Calu3 (cell line): ENCODE measurements at regions of chr9 and their contacts with region 1.

Region 1: DNA sequence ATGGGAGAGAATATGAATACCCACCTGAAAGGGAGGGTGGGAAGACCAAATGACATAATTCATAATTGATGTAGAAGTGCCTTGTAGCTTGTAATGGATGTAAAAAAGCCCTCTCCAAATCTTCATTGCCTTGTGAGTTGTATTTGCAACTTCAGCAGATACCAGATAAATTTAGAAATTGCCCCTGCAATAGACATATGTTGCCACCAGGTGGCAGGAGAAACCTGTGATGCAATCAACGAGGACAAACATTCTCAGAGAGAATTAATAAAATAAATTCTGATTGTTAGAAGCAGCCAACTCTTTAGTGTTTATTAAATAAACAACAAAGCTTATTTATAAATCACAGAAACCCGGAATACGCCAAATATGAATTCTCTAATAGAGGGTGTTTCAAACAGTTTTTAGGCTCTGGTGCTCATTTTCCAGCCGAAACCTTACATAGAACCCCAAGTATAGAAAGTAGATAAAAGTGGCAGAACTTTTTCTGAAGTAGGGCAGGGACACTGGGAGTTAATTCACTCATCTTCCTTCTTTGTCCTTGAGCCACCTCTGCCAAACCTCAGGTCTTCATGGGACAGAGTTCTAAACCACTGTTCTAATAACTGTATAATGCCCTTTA is 147.8 kb downstream of the TMEM38B start:
- DNase-seq: peak; percentile 43
- H3K4me3 Mint-ChIP-seq: no peak overlapping the region
- H3K27ac Mint-ChIP-seq: no peak overlapping the region
- H3K4me1 Mint-ChIP-seq: no peaks in the 10 kb centered on the region
- H3K27me3 Mint-ChIP-seq: peaks cover 8% of the 10 kb centered on the region
- CTCF ChIP-seq: peak; percentile 52

Region 2: GRCh38 chr9:105656131-105656921 is 185.8 kb before region 1 on chr9:
- CTCF ChIA-PET with region 1: no interaction called
- intact Hi-C with region 1: no loop called
- DNase-seq: peak; percentile 37
- H3K4me3 Mint-ChIP-seq: peak overlapping the region; percentile 75
- H3K27ac Mint-ChIP-seq: no peak overlapping the region
- H3K4me1 Mint-ChIP-seq: no peaks in the 10 kb centered on the region
- H3K27me3 Mint-ChIP-seq: peaks cover 19% of the 10 kb centered on the region
- CTCF ChIP-seq: no peak

Region 3: DNA sequence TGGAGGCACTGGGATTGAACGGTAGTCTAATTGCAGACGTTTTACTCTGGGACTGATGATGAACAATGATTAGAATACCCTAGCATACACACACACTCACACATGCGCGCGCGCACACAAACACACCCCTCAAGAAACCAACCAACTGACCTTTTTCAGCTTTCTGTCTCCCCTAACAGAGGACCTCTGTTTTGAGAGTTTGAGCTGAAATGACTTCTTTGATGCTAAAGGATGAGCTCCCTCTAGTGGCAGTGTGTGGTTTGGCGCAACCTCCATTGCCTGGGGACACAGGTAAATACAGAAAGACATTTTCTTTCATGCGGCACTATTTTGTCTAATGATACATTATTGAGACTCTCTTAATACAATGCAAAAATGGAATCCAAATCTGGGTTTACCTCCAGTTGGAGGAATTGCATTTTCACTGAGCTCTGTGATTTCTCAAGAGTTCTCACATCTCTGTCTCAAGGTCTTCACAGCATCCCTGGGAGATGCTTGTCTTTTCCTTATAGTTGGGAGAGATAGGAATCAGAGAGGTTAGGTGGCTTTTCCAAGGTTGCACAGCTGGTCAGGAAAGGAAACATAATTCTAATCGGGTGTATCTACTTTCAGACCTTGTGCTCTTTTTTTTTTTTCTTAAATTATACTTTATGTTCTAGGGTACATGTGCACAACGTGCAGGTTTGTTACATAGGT is 39.7 kb after region 1 on chr9:
- CTCF ChIA-PET with region 1: interaction called, 13 read pairs
- intact Hi-C with region 1: loop called (anchors 1 kb)
- DNase-seq: peak; percentile 68
- H3K4me3 Mint-ChIP-seq: no peak overlapping the region
- H3K27ac Mint-ChIP-seq: no peak overlapping the region
- H3K4me1 Mint-ChIP-seq: no peaks in the 10 kb centered on the region
- H3K27me3 Mint-ChIP-seq: peaks cover 14% of the 10 kb centered on the region
- CTCF ChIP-seq: peak; percentile 38

Region 4: GRCh38 chr9:106143781-106144180 is 301.6 kb after region 1 on chr9:
- CTCF ChIA-PET with region 1: no interaction called
- intact Hi-C with region 1: no loop called
- DNase-seq: no peak
- H3K4me3 Mint-ChIP-seq: no peak overlapping the region
- H3K27ac Mint-ChIP-seq: no peak overlapping the region
- H3K4me1 Mint-ChIP-seq: no peaks in the 10 kb centered on the region
- H3K27me3 Mint-ChIP-seq: peaks cover 30% of the 10 kb centered on the region
- CTCF ChIP-seq: no peak

Region 5: DNA sequence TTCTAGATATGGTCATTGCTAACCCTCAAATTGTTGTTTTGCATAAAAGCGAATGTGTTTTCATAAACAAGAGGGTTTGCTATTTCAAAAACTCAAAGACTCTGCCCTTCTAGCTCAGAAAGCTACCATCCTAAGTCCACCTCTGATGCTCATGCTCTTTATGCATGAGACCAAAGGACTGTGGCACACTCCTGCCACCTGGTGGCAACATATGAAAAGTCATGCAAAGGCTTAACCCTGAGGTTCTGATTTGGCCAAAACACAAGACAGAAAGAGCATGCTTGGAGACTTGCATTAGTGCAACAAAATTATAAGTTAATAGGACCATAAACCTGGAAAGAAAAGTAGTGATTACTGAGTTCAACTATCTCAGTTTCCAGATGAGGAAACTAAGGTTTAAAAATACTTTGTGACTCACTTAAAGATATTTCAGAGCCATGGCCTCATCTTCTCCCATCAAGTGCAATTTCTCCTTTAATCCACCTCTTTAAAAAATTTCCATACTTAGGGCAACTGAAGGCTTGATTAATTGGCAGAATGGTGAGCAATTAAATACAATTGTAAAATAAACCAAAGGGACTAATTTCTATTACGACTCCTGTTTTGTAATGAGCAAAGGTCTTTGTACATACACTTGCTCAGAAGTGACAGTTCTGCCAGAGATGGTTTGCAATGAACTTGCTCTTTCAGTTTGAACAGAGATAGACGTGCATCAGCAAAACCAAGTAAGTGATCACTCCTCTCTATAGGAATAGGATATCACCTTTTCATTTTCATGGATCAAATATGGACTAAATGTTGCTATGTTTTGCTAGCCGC is 1330.2 kb after region 1 on chr9:
- CTCF ChIA-PET with region 1: no interaction called
- intact Hi-C with region 1: loop called (anchors 5 kb)
- DNase-seq: peak; percentile 71
- H3K4me3 Mint-ChIP-seq: no peak overlapping the region
- H3K27ac Mint-ChIP-seq: no peak overlapping the region
- H3K4me1 Mint-ChIP-seq: no peaks in the 10 kb centered on the region
- H3K27me3 Mint-ChIP-seq: peaks cover 9% of the 10 kb centered on the region
- CTCF ChIP-seq: no peak